Sciatic nerve (tissue), 2 donors: ENCODE measurements at regions of chr5 and their contacts with region 1.

Region 1: GRCh38 chr5:52554297-52554696 is 233.4 kb upstream of the ITGA1 start:
- DNase-seq: no peak
- ATAC-seq: no peak

Region 2: DNA sequence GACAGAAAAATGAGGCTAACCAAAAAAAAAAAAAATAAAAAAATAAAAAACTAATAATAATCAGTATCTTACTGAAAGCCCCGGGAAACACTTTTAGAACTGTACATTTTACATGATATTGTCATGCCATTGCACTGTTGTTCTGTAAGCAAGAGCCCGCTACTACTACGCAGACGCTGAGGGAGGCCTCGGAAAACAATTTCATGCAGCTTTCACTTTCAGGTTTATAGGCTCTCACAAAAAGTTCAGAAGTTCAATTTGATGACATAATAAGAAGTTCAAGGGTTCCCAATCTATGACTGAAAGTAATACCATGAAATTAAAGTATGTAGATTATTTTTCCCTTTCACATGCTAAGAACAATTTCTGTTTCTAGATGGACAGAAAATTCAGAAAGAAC is 84.9 kb before region 1 on chr5:
- intact Hi-C with region 1: no loop called
- DNase-seq: no peak
- ATAC-seq: peak; percentile 79

Region 3: GRCh38 chr5:52481201-52481600 is 73.1 kb before region 1 on chr5:
- intact Hi-C with region 1: loop called (anchors 2 kb)
- DNase-seq: no peak
- ATAC-seq: no peak

Region 4: GRCh38 chr5:53392073-53392472 is 837.8 kb after region 1 on chr5:
- intact Hi-C with region 1: no loop called
- DNase-seq: no peak
- ATAC-seq: no peak